Mucosa of descending colon (tissue), 3 donors: ENCODE measurements at regions of chr7 and their contacts with region 1.

Region 1: DNA sequence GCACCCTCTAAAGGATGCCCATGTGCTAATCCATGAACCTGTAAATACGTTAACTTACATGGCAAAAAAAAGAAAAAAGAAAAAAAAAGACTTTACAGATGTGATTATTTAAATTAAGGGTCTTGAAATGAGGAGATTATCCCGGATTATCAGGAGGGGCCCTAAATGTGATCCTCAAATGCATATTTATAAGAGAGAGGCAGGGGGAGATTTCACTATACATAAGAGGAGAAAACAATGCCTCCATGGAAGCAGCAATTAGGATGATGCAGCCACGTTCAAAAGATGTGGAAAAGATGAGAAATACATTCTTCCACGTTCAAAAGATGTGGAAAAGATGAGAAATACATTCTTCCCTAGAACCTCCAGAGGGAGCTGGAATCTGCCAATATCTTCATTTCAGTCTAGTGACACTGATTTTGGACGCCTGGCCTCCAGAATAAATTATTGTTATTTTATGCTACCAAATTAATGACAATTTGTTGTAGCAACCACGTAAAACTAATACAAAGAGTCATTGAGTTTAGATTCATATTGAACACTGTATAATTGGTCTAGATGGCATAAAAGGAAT is 328.4 kb upstream of the GNAI1 start:
- DNase-seq: no peak
- ATAC-seq: no peak
- H3K4me3 ChIP-seq: no peak overlapping the region
- H3K4me1 ChIP-seq: no peaks in the 10 kb centered on the region
- CTCF ChIP-seq: no peak

Region 2: DNA sequence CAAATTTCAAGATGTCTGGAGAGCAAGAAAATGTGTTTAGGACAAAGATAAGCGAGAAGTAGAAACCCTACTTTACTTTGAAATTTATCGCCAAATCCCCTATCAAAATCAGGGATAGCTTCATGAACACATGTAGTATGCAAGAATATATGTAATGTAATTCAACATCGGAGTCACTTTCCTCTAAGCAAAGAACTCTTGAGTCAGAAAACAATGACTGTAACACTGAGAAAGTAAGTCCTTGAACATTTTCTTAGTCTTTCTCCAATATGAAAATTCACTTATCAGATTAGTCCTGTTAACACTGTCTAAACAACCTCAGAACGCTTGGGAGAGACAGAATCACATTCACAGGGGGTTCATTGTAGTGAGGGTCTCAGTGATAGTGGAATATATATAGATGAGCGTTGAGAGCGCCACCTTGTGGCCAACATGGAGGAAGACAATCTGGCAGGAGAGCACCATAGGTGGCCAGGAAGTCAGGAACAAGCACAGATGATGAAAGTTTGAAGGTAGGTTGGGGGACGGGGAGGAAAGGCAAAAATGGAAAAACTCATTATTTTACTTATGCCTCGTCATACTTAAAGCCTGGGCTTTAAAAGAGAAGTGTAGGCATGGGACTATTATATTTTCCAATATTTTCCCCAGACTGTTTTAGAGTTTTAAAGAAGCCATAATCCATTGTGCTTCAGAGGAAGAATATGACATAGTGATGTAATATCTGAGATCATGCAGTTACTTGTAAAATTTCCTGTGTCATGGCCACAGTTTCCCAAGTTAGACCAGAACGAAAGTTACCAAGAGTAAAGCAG is 212.9 kb after region 1 on chr7:
- intact Hi-C with region 1: loop called in 1 of 2 experiments (anchors 5 kb)
- DNase-seq: peak in 2 of 3 donors; percentile 22 to 23
- ATAC-seq: peak; percentile 68
- H3K4me3 ChIP-seq: no peak overlapping the region
- H3K4me1 ChIP-seq: no peaks in the 10 kb centered on the region
- CTCF ChIP-seq: peak; percentile 70